ENCODE measurements at regions of chr3 and their contacts with region 1.

Region 1: GRCh38 chr3:101695779-101696372 is 9.4 kb upstream of the RPL24 start:
- DNase-seq: peak; percentile 38
- H3K4me3 ChIP-seq: no peak overlapping the region
- H3K27ac ChIP-seq: no peak overlapping the region
- H3K4me1 ChIP-seq: no peaks in the 10 kb centered on the region
- H3K27me3 ChIP-seq: no peaks in the 10 kb centered on the region
- CTCF ChIP-seq: peak; percentile 45 to 64

Region 2: GRCh38 chr3:101725194-101725889 is 29.5 kb after region 1 on chr3:
- CTCF ChIA-PET with region 1: no interaction called
- dilution Hi-C with region 1: no loop called
- in situ Hi-C with region 1: no loop called
- intact Hi-C with region 1: no loop called
- DNase-seq: no peak
- H3K4me3 ChIP-seq: peak overlapping the region; percentile 68 to 99 (median 85)
- H3K27ac ChIP-seq: peak overlapping the region; percentile 56
- H3K4me1 ChIP-seq: peaks cover 28% of the 10 kb centered on the region
- H3K27me3 ChIP-seq: no peaks in the 10 kb centered on the region
- CTCF ChIP-seq: no peak

Region 3: DNA sequence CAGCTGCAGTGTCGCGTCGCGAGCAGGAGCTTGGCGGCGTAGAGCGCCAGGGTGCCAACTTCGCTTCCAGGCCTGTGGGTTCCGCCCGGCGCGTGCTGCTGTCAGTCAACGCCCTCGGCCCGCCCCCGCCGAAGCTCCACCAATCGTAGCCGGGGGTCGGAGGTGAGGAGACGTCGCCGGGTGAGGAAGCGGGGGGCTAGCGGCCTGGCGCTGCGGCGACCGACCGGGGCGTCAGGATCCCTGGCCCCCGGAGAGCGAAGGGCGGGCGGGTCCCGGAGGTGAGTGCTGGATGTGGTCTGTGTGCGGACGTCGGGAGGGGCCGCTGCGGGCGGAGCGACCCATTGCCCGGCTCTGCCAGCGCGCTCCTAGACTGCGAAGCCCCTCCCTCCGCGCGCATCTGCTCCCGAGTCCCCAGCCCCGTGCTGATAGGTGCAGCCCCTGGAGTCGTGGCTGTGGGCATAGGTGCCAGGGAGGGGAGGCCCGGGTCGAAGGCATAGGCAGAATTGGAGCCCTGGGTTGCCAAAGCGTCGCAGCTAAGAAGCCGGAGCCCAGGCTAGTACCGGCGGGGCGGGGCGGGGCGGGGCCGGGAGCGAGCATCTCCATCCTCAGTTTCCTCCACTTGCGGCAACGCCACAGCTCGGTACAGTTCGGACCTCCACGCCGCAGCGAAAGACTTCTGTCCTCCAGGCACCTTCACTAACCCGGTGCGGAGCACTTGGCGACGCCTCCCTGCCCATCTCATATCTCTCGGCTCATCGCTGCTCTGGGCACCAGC is 83.4 kb after region 1 on chr3 and contains the start of gene NXPE3:
- CTCF ChIA-PET with region 1: no interaction called
- dilution Hi-C with region 1: no loop called
- in situ Hi-C with region 1: no loop called
- intact Hi-C with region 1: loop called (anchors 5 kb)
- DNase-seq: peak; percentile 81
- H3K4me3 ChIP-seq: peak within 1 kb of the TSS; percentile 58 to 88 (median 65)
- H3K27ac ChIP-seq: peak within 1 kb of the TSS; percentile 37
- H3K4me1 ChIP-seq: peaks cover 23% of the 10 kb centered on the region
- H3K27me3 ChIP-seq: no peaks in the 10 kb centered on the region
- CTCF ChIP-seq: no peak
- total RNA-seq, gene NXPE3: 19.4 to 21.5 TPM

Measured in mammary epithelial cell (primary cell).